PC-3 (cell line): ENCODE measurements at regions of chrX and their contacts with region 1.

Region 1: DNA sequence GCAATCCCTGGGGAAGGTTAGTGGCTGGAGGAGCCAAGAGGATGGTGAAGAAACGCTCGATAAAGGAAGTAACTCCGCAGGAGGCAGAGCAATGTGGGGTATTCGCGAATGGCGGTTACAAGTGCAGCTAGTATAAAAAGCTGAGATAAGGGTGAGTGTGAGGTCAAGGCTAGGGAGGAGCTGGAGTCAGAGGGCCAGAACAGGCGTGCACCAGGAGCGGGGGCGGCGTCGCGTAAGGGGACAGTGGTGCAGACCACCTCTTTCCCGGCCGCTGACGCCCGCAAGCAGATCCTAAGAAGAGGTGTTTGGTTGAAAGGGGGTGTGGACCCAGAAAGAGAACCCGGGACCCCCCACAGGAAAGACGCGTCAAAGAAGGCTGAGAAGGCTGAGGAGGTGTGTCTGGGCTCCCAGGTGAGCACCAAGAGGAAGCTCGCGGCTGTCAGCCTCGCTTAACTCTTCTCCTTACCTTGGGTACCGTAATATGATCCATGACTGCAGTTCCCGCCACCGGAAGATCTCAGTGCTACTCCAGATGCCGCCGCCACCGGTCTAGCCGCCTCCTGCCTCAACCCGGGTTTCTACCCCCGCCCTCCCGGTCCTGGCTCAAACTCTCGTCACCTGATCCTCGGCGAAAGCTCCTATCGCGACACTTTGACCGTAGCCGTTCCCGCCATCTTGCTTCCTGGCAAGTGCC is at the start of gene MTMR8:
- DNase-seq: peak; percentile 65
- ATAC-seq: peak; percentile 92
- H3K4me3 ChIP-seq: peak within 1 kb of the TSS; percentile 68
- H3K27ac ChIP-seq: no peak within 1 kb of the TSS
- H3K4me1 ChIP-seq: no peaks in the 10 kb centered on the region
- H3K27me3 ChIP-seq: no peaks in the 10 kb centered on the region
- CTCF ChIP-seq: no peak
- total RNA-seq, gene MTMR8: 0.46 and 0.87 TPM in 2 replicates

Region 2: DNA sequence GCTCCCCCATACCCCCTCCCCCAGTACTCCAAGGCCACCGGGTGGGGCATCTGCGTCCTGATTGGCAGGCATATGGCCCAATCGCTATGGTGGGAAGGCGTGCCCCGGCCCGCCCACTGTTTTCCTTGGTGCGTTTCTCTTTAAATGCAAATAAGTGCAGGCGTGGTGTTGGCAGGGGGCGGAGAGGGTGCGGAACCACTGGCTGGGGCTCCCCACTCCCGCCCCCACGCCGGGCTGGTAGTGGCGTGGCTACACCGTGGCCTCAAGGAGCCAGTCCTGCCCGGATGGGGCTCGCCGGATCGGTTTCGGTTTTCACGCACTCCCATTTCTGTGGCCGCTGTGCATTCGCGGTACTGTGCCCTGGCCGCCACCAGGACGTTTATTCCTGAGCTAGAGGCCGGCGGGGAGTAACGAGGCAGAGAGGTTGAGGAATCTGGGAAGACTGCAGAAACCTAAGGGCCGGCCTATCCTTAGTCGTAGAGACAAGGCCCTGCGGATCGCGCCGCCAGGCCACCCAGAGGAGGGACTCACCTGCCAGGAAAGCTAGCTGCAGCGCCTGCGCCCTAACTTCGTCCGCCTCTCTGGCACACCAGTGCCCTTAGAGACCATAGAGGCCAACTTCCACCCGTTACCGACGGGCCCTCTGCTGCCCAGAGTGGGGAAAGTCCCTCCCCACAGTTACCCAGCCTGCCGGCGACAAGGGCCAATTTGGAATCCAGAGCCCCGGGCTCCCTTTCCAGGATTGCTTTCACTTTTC is 189.1 kb before region 1 on chrX:
- CTCF ChIA-PET with region 1: no interaction called
- POLR2A ChIA-PET with region 1: interaction called, 3 read pairs
- intact Hi-C with region 1: loop called (anchors 5 kb)
- DNase-seq: peak; percentile 92
- ATAC-seq: peak; percentile 89
- H3K4me3 ChIP-seq: peak overlapping the region; percentile 88
- H3K27ac ChIP-seq: peak overlapping the region; percentile 88
- H3K4me1 ChIP-seq: peaks cover 17% of the 10 kb centered on the region
- H3K27me3 ChIP-seq: no peaks in the 10 kb centered on the region
- CTCF ChIP-seq: peak; percentile 18; the same call in 1 of the 2 replicates